ENCODE measurements at regions of chr12 and their contacts with region 1.

Region 1: GRCh38 chr12:106136263-106136662 is 2.5 kb downstream of the NUAK1 start:
- DNase-seq: peak; percentile 82 to 89 (median 86)
- ATAC-seq: no peak
- H3K4me3 ChIP-seq: no peak overlapping the region
- H3K27ac ChIP-seq: peak overlapping the region in 2 of 4 donors; percentile 4 to 15
- H3K4me1 ChIP-seq: peaks cover 48% of the 10 kb centered on the region
- H3K27me3 ChIP-seq: no peaks in the 10 kb centered on the region
- CTCF ChIP-seq: peak; percentile 72 to 87 (median 80)
- POLR2A ChIP-seq: peak in 1 of 3 donors; percentile 40

Region 2: GRCh38 chr12:105420659-105421240 is 715.5 kb before region 1 on chr12:
- intact Hi-C with region 1: loop called (anchors 10 kb)
- DNase-seq: peak; percentile 76 to 81 (median 79)
- ATAC-seq: peak; percentile 95
- H3K4me3 ChIP-seq: no peak overlapping the region
- H3K27ac ChIP-seq: no peak overlapping the region
- H3K4me1 ChIP-seq: no peaks in the 10 kb centered on the region
- H3K27me3 ChIP-seq: no peaks in the 10 kb centered on the region
- CTCF ChIP-seq: peak; percentile 75 to 96 (median 91)
- POLR2A ChIP-seq: no peak

Region 3: GRCh38 chr12:106248846-106249371 is 112.6 kb after region 1 on chr12:
- intact Hi-C with region 1: no loop called
- DNase-seq: peak in 2 of 4 donors; percentile 27 to 37
- ATAC-seq: no peak
- H3K4me3 ChIP-seq: peak overlapping the region in 1 of 2 donors; percentile 64
- H3K27ac ChIP-seq: peak overlapping the region; percentile 96 to 100 (median 97)
- H3K4me1 ChIP-seq: peaks cover 45% of the 10 kb centered on the region
- H3K27me3 ChIP-seq: no peaks in the 10 kb centered on the region
- CTCF ChIP-seq: no peak
- POLR2A ChIP-seq: no peak

Region 4: DNA sequence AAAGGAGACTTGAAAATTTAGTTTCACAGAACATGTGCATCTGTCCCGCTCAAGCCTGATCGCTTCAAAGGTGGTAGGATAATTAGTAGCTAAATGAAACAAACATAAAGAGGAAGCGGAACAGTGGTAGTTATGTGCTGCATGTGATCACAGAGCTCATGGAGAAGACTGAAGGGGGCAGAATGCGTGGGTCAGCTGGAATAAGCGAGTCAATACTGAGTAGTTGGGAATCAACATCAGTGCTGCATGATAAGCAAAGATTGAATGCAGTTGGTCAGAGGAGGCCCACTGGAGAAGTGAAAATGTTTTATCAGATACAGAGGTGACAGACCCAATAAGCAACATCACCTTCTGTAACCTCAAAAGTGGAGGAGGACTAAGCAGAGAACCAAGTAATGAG is 351.4 kb after region 1 on chr12:
- intact Hi-C with region 1: no loop called
- DNase-seq: no peak
- ATAC-seq: no peak
- H3K4me3 ChIP-seq: no peak overlapping the region
- H3K27ac ChIP-seq: no peak overlapping the region
- H3K4me1 ChIP-seq: no peaks in the 10 kb centered on the region
- H3K27me3 ChIP-seq: no peaks in the 10 kb centered on the region
- CTCF ChIP-seq: no peak
- POLR2A ChIP-seq: no peak

Measured in body of pancreas (tissue), 4 donors.